ENCODE measurements at regions of chr1 and their contacts with region 1.

Region 1: GRCh38 chr1:244652699-244653466 is at the start of gene DESI2:
- DNase-seq: peak; percentile 96 to 99
- ATAC-seq: peak; percentile 88 to 96 (median 88)
- H3K4me3 ChIP-seq: peak within 1 kb of the TSS; percentile 90
- H3K4me3 Mint-ChIP-seq: peak within 1 kb of the TSS; percentile 77
- H3K27ac ChIP-seq: peak within 1 kb of the TSS; percentile 76
- H3K27ac Mint-ChIP-seq: peak within 1 kb of the TSS in 1 of 2 donors; percentile 75
- H3K4me1 ChIP-seq: peaks cover 14% of the 10 kb centered on the region
- H3K4me1 Mint-ChIP-seq: peaks cover 19 to 22% of the 10 kb centered on the region in 2 donors
- H3K27me3 ChIP-seq: no peaks in the 10 kb centered on the region
- H3K27me3 Mint-ChIP-seq: peaks cover 0 to 4% of the 10 kb centered on the region in 2 donors
- CTCF ChIP-seq: peak; percentile 48
- total RNA-seq, gene DESI2: 24.1 to 30.5 (median 25.4) TPM

Region 2: GRCh38 chr1:244451951-244452795 is 200.7 kb before region 1 on chr1:
- intact Hi-C with region 1: loop called (anchors 1 kb)
- DNase-seq: peak; percentile 98 to 100
- ATAC-seq: peak; percentile 85 to 96 (median 90)
- H3K4me3 ChIP-seq: peak overlapping the region; percentile 72
- H3K4me3 Mint-ChIP-seq: peak overlapping the region; percentile 80
- H3K27ac ChIP-seq: peak overlapping the region; percentile 92
- H3K27ac Mint-ChIP-seq: peak overlapping the region; percentile 85 to 88
- H3K4me1 ChIP-seq: peaks cover 9% of the 10 kb centered on the region
- H3K4me1 Mint-ChIP-seq: peaks cover 33 to 37% of the 10 kb centered on the region in 2 donors
- H3K27me3 ChIP-seq: no peaks in the 10 kb centered on the region
- H3K27me3 Mint-ChIP-seq: no peaks in the 10 kb centered on the region
- CTCF ChIP-seq: peak; percentile 31